Activated T-helper 1 cell treated with anti-CD3 and anti-CD28 coated beads, Interleukin-12 subunit alpha, Interleukin-12 subunit beta, Interleukin-2, Interleukin-4 antibody, amounts not matched to agents 30 ng/mL and 10 ng/mL and 1 ng/mL, durations not matched to agents 14 hours and 24 hours and 36 hours (primary cell): ENCODE measurements at regions of chr4 and their contacts with region 1.

Region 1: GRCh38 chr4:37891260-37892159 is 626 bp downstream of the TBC1D1 start:
- DNase-seq: peak; percentile 53
- H3K4me3 Mint-ChIP-seq: peak overlapping the region; percentile 93
- H3K27ac Mint-ChIP-seq: peak overlapping the region; percentile 95
- H3K4me1 Mint-ChIP-seq: peaks cover 48% of the 10 kb centered on the region
- H3K27me3 Mint-ChIP-seq: peaks cover 19% of the 10 kb centered on the region

Region 2: GRCh38 chr4:37603070-37603468 is 288.4 kb before region 1 on chr4:
- intact Hi-C with region 1: loop called (anchors 2 kb)
- DNase-seq: peak; percentile 59
- H3K4me3 Mint-ChIP-seq: no peak overlapping the region
- H3K27ac Mint-ChIP-seq: no peak overlapping the region
- H3K4me1 Mint-ChIP-seq: peaks cover 33% of the 10 kb centered on the region
- H3K27me3 Mint-ChIP-seq: no peaks in the 10 kb centered on the region

Region 3: DNA sequence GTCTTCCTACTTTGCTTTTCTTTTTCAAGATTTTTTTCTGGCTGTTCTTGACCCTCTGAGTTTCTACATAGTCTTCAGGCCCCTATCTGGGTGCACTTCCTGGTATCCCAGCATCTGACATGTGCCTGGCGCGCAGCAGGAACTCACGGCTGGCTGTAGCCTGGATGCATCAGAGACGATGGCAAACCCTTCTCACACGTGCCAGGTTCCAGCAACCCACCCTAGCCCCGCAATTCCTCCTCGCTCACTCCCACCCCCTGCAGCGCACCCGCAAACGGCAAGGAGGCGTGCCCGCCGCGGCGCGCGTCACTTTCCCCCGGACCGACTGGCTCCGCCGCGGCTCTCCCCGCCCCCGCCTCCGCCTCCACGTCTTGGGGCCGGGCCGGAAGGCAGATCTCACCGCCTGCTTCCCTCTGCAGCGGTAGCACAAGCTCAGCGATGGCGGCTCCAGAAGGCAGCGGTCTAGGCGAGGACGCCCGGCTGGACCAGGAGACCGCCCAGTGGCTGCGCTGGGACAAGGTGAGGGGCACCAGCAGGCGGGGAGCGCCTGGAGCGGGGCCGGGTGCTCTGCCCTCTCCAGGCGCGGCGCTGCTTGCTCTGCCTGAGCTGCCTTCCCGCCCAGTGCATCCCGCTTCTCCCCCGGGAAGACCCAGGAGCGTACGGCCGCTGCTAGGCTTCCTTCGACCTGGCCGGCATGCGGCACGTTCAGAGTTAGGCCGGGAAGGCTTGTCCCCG is 65.0 kb before region 1 on chr4 and contains the start of gene PGM2:
- intact Hi-C with region 1: loop called (anchors 1 kb)
- DNase-seq: peak; percentile 88
- H3K4me3 Mint-ChIP-seq: peak within 1 kb of the TSS; percentile 87
- H3K27ac Mint-ChIP-seq: peak within 1 kb of the TSS; percentile 86
- H3K4me1 Mint-ChIP-seq: peaks cover 40% of the 10 kb centered on the region
- H3K27me3 Mint-ChIP-seq: no peaks in the 10 kb centered on the region
- total RNA-seq, gene PGM2: 43.0 and 50.0 TPM in 2 replicates

Region 4: GRCh38 chr4:37928426-37929416 is 37.2 kb after region 1 on chr4:
- intact Hi-C with region 1: loop called (anchors 1 kb)
- DNase-seq: no peak
- H3K4me3 Mint-ChIP-seq: no peak overlapping the region
- H3K27ac Mint-ChIP-seq: no peak overlapping the region
- H3K4me1 Mint-ChIP-seq: peaks cover 25% of the 10 kb centered on the region
- H3K27me3 Mint-ChIP-seq: no peaks in the 10 kb centered on the region

Region 5: DNA sequence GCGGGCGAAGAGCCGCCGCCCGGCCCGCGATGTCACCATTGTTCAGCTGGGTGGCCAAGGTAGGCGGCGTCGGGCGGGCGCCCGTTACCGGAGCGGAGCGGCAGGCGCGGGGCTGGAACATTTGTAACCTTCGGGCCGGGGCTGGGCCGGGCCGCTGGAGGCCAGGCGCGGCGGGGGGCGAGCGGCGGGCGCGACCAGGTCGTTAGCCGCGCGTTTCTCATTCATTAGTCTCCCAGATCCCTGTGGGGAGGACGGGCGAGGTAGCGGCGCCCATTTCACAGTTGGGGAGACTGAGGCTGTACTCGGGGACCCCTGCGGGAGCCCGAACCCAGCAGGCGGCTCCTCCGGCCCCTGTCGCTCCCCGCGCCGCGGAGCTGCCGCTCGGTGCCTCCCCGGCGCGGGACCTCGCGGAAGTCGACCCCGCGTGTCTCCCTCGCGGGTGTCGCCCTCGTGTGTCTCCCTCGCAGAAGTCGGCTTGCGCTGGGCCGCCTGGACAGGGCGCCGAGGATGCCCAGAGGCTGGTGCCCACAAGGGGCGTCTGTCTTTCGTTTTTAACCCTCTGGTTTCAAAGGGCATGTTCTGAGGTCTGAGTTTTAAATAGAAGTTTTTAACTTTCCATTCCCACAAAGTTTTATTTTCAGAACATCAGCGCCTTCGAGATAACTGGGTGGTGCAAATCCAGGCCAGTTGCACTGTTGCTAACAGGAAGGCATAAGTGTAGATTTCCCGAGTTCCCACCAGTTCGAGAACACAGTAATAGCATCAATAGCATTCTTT is 86.1 kb after region 1 on chr4:
- intact Hi-C with region 1: loop called (anchors 1 kb)
- DNase-seq: peak; percentile 70
- H3K4me3 Mint-ChIP-seq: peak overlapping the region; percentile 86
- H3K27ac Mint-ChIP-seq: peak overlapping the region; percentile 81
- H3K4me1 Mint-ChIP-seq: peaks cover 41% of the 10 kb centered on the region
- H3K27me3 Mint-ChIP-seq: no peaks in the 10 kb centered on the region

Region 6: DNA sequence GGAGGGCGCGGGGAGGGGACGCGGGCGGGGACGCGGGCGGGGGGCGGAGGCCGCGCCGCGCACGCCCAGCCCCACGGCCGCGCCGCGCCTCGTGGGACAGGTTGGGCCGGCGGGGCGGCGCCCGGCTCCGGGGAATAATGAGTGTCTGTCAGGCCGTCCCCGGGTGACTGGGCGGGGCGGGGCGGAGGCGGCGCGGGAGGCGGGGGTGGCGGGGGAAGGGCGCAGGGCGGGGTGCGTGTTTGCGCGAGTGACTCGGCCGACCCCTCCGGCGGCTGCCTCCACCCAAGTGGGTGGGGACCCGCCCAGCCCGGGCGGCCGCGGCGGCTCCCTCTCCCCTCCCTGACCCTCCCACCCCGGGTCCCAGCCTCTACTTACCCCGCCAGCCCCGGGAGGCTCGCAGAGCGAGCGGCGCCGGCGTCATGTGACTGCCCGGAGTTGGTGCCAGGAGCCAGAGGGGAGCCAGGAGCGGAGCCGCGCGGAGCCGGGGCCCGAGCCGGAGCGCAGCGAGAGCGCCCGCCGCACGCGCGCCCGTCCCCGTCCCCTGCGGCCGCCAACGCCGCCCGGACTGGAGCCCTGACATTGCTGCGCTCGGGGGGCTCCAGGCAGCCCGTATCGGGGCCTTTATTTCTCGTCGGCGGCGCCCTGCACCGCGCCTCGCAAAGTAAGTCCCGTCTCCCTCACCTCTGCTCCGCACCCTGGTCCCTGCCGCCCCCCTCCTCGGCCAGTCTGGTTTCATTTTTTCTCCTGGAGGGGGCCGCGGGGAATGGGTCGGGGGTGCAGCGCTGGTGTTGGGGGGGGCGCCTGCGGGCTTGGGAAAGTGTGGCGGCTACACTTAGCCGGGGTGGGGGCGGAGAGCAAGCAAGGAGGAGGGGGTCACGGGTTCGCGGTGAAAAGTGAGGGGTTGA is 772.5 kb after region 1 on chr4 and contains the start of gene KLF3:
- intact Hi-C with region 1: loop called (anchors 5 kb)
- DNase-seq: peak; percentile 86
- H3K4me3 Mint-ChIP-seq: peak within 1 kb of the TSS; percentile 85
- H3K27ac Mint-ChIP-seq: peak within 1 kb of the TSS; percentile 53
- H3K4me1 Mint-ChIP-seq: peaks cover 55% of the 10 kb centered on the region
- H3K27me3 Mint-ChIP-seq: peaks cover 24% of the 10 kb centered on the region
- total RNA-seq, gene KLF3: 1.8 and 1.9 TPM in 2 replicates